ENCODE measurements at regions of chr9 and their contacts with region 1.

Region 1: GRCh38 chr9:72592502-72593403 is 71.3 kb downstream of the TMC1 start:
- DNase-seq: peak; percentile 13
- H3K4me3 Mint-ChIP-seq: no peak overlapping the region
- H3K27ac Mint-ChIP-seq: no peak overlapping the region
- H3K4me1 Mint-ChIP-seq: peaks cover 46% of the 10 kb centered on the region
- H3K27me3 Mint-ChIP-seq: peaks cover 3% of the 10 kb centered on the region

Region 2: GRCh38 chr9:72038890-72039410 is 553.8 kb before region 1 on chr9:
- intact Hi-C with region 1: loop called (anchors 10 kb)
- DNase-seq: peak; percentile 36
- H3K4me3 Mint-ChIP-seq: no peak overlapping the region
- H3K27ac Mint-ChIP-seq: no peak overlapping the region
- H3K4me1 Mint-ChIP-seq: peaks cover 6% of the 10 kb centered on the region
- H3K27me3 Mint-ChIP-seq: peaks cover 11% of the 10 kb centered on the region

Region 3: GRCh38 chr9:72292256-72292682 is 300.5 kb before region 1 on chr9:
- intact Hi-C with region 1: loop called (anchors 1 kb)
- DNase-seq: no peak
- H3K4me3 Mint-ChIP-seq: no peak overlapping the region
- H3K27ac Mint-ChIP-seq: no peak overlapping the region
- H3K4me1 Mint-ChIP-seq: peaks cover 6% of the 10 kb centered on the region
- H3K27me3 Mint-ChIP-seq: peaks cover 18% of the 10 kb centered on the region

Region 4: GRCh38 chr9:72485821-72486593 is 106.7 kb before region 1 on chr9:
- intact Hi-C with region 1: no loop called
- DNase-seq: no peak
- H3K4me3 Mint-ChIP-seq: no peak overlapping the region
- H3K27ac Mint-ChIP-seq: no peak overlapping the region
- H3K4me1 Mint-ChIP-seq: peaks cover 12% of the 10 kb centered on the region
- H3K27me3 Mint-ChIP-seq: no peaks in the 10 kb centered on the region

Region 5: DNA sequence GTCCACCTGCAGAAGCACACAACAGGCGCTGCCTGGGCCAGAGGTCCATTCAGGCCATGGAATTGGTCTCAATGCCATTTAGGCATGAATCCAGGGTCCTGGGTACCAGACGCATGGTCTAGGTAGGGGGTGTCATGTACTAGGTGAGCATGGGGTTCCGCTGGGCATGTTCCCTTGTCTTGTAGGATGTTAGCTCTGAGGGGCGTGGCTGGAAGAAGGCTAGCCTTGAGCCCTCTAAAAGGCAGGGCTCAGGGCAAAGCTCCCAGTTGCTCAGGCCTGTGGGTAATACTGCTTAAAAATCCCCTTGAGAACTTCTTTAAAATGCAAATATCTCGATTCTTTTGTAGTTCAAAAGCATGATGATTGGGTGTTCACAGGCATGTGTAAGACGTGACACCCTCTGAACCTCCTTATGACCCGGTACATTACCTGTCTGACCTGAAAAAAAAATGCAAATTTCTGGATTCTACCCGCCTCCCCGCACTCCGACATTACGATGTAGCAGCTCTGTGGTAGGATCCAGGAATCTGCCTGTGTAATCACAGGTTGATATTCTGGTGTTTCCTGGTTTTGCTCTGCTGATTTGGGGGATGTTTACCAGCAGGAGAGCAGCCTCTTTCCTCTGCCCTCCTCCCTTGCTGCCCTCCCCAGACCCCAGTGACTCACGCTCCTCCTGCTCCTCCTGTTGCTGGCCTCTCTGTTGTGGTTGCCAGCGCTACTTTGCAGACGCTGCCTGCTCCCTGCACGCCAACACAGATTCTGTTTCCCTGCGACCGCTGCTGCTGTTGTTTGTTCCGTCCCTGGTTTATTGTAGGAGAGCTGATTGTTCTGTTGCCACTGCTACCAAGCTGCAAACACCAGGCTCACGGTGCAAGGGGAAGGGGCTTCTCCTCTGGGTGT is 65.6 kb before region 1 on chr9:
- intact Hi-C with region 1: loop called (anchors 1 kb)
- DNase-seq: peak; percentile 75
- H3K4me3 Mint-ChIP-seq: peak overlapping the region; percentile 69
- H3K27ac Mint-ChIP-seq: peak overlapping the region; percentile 95
- H3K4me1 Mint-ChIP-seq: peaks cover 66% of the 10 kb centered on the region
- H3K27me3 Mint-ChIP-seq: no peaks in the 10 kb centered on the region

Region 6: DNA sequence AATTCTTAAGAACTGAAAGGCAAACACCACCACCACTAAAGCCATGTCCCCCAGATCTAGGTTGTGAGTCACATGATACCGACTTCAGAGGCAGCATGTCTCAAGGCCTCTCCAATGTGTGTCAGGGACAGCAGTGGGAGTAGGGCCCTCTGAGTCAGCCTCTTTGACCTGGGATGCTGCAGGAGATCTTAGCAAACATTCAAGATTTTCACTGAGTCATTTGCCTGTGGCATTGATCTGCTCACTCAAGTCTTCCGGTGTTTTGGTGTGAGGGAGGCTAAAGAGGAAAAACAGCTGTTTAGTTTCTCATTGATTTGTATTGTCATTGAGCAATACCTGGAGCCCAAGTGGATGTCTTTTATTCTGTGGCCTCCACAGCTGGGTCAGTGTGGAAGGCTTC is 35.2 kb before region 1 on chr9:
- intact Hi-C with region 1: loop called (anchors 2 kb)
- DNase-seq: peak; percentile 21
- H3K4me3 Mint-ChIP-seq: peak overlapping the region; percentile 3
- H3K27ac Mint-ChIP-seq: peak overlapping the region; percentile 90
- H3K4me1 Mint-ChIP-seq: peaks cover 21% of the 10 kb centered on the region
- H3K27me3 Mint-ChIP-seq: no peaks in the 10 kb centered on the region

Measured in activated T-helper 1 cell treated with anti-CD3 and anti-CD28 coated beads, Interleukin-12 subunit alpha, Interleukin-12 subunit beta, Interleukin-2, Interleukin-4 antibody, amounts not matched to agents 30 ng/mL and 10 ng/mL and 1 ng/mL, durations not matched to agents 14 hours and 24 hours and 36 hours (primary cell).